PC-9 (cell line): ENCODE measurements at regions of chr16 and their contacts with region 1.

Region 1: DNA sequence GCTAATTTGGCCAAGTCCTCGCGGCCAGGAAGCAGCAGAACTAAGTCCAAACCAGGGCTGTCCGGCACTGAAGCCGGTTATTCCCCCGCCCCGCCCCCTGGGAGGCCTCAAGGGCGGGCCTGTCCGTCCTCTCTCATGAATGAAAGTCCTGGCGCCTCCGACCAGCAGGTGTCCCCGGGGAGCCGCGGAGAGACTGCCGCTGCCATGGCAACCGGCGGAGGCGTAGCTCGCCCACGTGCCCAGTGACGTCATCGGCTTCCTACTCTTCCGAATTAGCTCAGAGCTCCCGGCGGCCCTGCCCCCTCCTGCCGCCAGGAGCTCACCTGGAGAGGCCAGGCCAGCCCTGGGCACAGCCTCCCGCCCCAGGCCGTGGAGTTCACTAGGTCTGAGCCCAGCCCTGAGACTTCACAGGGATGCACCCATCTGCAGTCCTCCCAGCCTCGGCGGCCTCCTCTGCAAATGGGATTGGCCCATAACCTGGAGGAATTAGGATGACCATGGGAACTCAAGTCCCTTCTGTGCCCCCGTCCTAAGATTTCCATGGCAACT is 1.3 kb downstream of the SPATA2L start:
- DNase-seq: peak; percentile 96 to 100
- H3K4me3 ChIP-seq: peak overlapping the region; percentile 67
- H3K27ac ChIP-seq: peak overlapping the region; percentile 29; the same call in 1 of the 2 replicates
- H3K4me1 ChIP-seq: peaks cover 5% of the 10 kb centered on the region; the same call in 1 of the 2 replicates
- H3K27me3 ChIP-seq: no peaks in the 10 kb centered on the region
- CTCF ChIP-seq: peak; percentile 79

Region 2: DNA sequence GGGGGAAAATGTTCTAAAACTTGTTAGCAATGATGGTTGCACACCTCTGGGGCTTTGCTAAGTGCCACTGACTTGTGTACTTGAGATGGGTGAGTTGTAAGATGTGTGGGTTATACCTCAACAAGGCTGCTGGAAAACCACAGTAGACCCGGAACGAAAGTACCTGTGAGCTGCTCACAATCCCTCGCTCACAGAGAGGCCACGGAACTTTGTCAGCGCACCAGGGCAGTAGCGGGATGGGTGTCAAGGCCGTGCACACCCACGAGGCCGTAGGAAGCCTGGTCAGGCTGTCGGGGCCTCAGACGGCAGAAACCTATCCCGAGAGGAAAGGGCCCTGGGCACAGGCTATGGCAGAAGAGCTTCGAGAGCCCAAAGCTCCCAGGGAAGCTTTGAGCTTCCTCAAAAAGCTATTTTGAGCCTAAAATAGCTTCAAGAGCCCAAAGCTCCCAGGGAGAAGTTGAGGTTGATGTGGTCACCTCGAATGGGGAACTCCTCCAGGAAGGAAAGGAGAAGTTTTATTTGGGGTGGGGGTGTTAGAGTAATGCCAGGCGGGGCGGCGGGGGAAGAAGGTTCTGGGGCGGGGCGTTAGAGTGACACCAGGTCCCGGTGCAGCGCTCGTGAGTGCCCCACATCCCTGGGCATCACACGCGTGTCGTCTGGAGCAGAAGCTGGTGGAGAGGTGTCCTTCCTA is 742.1 kb before region 1 on chr16:
- CTCF ChIA-PET with region 1: no interaction called
- POLR2A ChIA-PET with region 1: no interaction called
- intact Hi-C with region 1: no loop called
- DNase-seq: no peak
- H3K4me3 ChIP-seq: no peak overlapping the region
- H3K27ac ChIP-seq: no peak overlapping the region
- H3K4me1 ChIP-seq: no peaks in the 10 kb centered on the region
- H3K27me3 ChIP-seq: peaks cover 63% of the 10 kb centered on the region
- CTCF ChIP-seq: no peak

Region 3: GRCh38 chr16:89517128-89517527 is 183.0 kb before region 1 on chr16:
- CTCF ChIA-PET with region 1: no interaction called
- POLR2A ChIA-PET with region 1: no interaction called
- intact Hi-C with region 1: no loop called
- DNase-seq: no peak
- H3K4me3 ChIP-seq: no peak overlapping the region
- H3K27ac ChIP-seq: no peak overlapping the region
- H3K4me1 ChIP-seq: no peaks in the 10 kb centered on the region
- H3K27me3 ChIP-seq: no peaks in the 10 kb centered on the region
- CTCF ChIP-seq: no peak

Region 4: GRCh38 chr16:89574681-89575246 is 125.4 kb before region 1 on chr16:
- CTCF ChIA-PET with region 1: no interaction called
- POLR2A ChIA-PET with region 1: no interaction called
- intact Hi-C with region 1: loop called (anchors 5 kb)
- DNase-seq: peak; percentile 46 to 86
- H3K4me3 ChIP-seq: peak overlapping the region; percentile 76
- H3K27ac ChIP-seq: no peak overlapping the region
- H3K4me1 ChIP-seq: peaks cover 7% of the 10 kb centered on the region; the same call in 1 of the 2 replicates
- H3K27me3 ChIP-seq: no peaks in the 10 kb centered on the region
- CTCF ChIP-seq: peak; percentile 65; the same call in 1 of the 2 replicates

Region 5: DNA sequence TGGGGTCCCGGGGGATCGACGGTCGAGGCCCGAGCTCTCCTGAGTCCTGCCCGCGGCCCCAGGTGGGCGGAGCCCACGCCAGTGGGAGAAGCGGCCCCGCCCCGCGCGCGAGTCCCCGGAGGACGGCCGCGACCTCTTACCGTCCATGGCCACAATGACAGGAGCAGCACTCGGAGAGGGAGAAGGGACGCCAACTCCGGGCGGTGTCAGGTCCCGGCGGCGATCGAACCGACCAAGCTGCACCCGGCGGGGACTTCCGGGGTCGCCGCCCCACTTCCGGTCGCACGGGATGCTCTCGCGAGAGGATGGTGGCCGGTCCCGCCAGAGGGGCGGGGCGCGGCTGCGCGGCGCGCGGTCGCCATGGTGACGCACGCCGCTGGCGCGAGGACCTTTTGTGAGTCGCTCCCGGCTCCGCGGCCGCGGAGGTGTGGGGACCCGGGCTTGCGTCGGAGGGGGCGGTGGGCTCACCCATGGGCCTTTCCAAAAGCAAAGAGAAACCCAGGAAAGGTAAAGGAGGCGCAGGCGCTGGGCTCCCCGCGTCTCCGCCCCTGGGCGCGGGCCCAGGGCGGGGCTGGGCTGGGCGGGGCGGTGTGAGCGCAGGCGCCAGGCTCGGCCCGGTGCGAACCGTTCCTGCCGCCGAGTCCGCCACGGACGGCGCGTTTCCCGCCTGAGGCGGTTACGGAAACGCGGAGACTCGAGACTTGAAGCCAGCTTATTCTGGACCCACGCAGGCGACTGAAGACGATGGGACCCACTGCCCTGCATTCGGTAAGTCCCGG is 42.5 kb before region 1 on chr16 and contains the starts of genes CHMP1A and SPATA33:
- CTCF ChIA-PET with region 1: interaction called, 4 read pairs
- POLR2A ChIA-PET with region 1: interaction called, 10 read pairs
- intact Hi-C with region 1: no loop called
- DNase-seq: peak; percentile 66 to 95
- H3K4me3 ChIP-seq: peak within 1 kb of the TSS; percentile 93
- H3K27ac ChIP-seq: no peak within 1 kb of the TSS
- H3K4me1 ChIP-seq: peaks cover 18% of the 10 kb centered on the region
- H3K27me3 ChIP-seq: no peaks in the 10 kb centered on the region
- CTCF ChIP-seq: no peak
- total RNA-seq, gene CHMP1A: 151 and 237 TPM in 2 replicates
- total RNA-seq, gene SPATA33: 21.0 and 25.6 TPM in 2 replicates

Region 6: DNA sequence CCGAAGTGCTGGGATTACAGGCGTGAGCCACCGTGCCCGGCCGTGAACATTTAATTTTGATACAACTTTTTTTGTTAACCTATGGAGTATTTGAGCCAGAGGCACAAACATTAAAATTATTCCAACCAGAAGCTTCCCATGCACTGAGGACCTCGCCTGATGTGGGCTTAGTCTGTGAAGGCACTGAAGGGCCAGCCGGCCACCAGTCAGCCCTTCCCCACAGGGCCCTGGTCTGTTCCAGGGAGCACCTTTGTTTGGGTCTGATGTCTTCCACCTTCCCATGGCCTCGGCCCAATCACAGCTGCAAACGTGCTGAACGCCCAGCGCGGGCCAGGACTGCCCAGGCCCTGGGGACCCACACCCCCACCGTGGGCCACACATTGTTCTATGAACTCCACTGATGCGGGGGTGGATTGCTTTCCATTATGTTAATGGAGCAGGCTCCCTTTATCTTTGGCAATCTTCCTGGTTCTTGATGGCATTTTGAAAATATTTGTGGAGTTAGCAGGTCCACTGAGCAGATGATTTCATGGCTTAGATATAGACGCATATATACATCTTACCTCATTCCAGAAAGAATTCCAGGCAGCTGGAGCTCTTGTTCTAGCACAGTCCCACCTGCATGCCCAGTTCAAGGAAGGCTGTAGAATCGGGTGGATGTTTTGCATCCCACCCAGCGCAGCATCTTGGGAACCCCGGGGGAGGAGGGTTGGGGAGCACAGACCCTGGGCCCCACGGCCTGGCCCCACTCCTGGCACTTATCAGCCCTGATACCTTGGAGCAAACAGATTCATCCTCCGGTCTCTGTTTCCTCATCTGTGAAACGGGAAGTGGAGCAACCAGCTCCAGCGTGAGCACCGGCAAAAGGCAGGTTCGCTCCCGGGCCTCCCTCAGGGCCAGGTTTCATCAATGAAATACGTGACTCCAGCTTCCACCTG is 142.6 kb after region 1 on chr16:
- CTCF ChIA-PET with region 1: no interaction called
- POLR2A ChIA-PET with region 1: no interaction called
- intact Hi-C with region 1: no loop called
- DNase-seq: peak in 1 of 2 experiments; percentile 63
- H3K4me3 ChIP-seq: no peak overlapping the region
- H3K27ac ChIP-seq: no peak overlapping the region
- H3K4me1 ChIP-seq: peaks cover 11% of the 10 kb centered on the region
- H3K27me3 ChIP-seq: no peaks in the 10 kb centered on the region
- CTCF ChIP-seq: no peak

Region 7: DNA sequence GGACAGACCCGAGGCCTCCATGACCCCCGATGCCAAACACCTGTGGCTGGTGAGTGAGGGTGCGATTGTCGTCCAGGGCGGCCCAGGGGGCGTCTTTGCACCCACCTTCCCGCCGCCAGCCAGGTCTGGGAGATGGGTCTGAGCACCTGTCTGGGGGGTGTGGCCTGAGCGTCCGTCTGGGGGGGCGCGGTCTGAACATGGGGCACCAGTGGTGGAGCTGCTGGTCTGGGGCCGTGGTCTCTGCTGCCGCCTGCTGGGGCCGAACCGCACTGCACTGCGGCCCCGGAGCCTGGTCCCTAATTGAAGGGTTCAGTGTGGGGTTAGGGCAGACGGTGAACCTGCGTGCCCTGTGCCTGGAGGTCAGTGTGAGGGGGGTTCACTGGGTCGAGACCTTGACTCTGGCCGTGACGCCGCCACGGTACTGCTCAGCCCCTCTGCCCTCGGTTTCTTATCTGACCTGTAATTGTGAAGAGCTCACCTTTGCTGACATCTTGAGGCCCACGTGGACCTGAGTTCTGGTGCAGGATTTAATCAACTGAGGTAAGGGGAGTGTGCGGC is 160.7 kb after region 1 on chr16:
- CTCF ChIA-PET with region 1: interaction called, 6 read pairs
- POLR2A ChIA-PET with region 1: no interaction called
- intact Hi-C with region 1: loop called (anchors 2 kb)
- DNase-seq: peak; percentile 40 to 83
- H3K4me3 ChIP-seq: no peak overlapping the region
- H3K27ac ChIP-seq: no peak overlapping the region
- H3K4me1 ChIP-seq: peaks cover 9% of the 10 kb centered on the region
- H3K27me3 ChIP-seq: no peaks in the 10 kb centered on the region
- CTCF ChIP-seq: peak; percentile 99

Region 8: GRCh38 chr16:90022209-90023064 is 322.3 kb after region 1 on chr16:
- CTCF ChIA-PET with region 1: no interaction called
- POLR2A ChIA-PET with region 1: no interaction called
- intact Hi-C with region 1: loop called (anchors 5 kb)
- DNase-seq: peak; percentile 78 to 94
- H3K4me3 ChIP-seq: peak overlapping the region; percentile 95
- H3K27ac ChIP-seq: peak overlapping the region; percentile 25
- H3K4me1 ChIP-seq: peaks cover 29% of the 10 kb centered on the region
- H3K27me3 ChIP-seq: no peaks in the 10 kb centered on the region
- CTCF ChIP-seq: no peak